ENCODE measurements at regions of chr9 and their contacts with region 1.

Region 1: GRCh38 chr9:21294325-21294724 is 10.8 kb downstream of the IFNA5 start:
- DNase-seq: peak in 2 of 3 donors; percentile 48 to 66
- H3K4me3 ChIP-seq: no peak overlapping the region
- H3K27ac ChIP-seq: no peak overlapping the region
- H3K4me1 ChIP-seq: peaks cover 11 to 26% (median 18%) of the 10 kb centered on the region in 4 experiments
- H3K27me3 ChIP-seq: no peaks in the 10 kb centered on the region

Region 2: GRCh38 chr9:21239911-21240310 is 54.4 kb before region 1 on chr9 and contains the start of gene IFNA14:
- CTCF ChIA-PET with region 1: interaction called, 10 read pairs
- POLR2A ChIA-PET with region 1: no interaction called
- DNase-seq: peak in 1 of 3 donors; percentile 2
- H3K4me3 ChIP-seq: no peak within 1 kb of the TSS
- H3K27ac ChIP-seq: no peak within 1 kb of the TSS
- H3K4me1 ChIP-seq: peaks cover 2 to 10% (median 5%) of the 10 kb centered on the region in 4 experiments
- H3K27me3 ChIP-seq: no peaks in the 10 kb centered on the region

Region 3: GRCh38 chr9:21326526-21327139 is 32.3 kb after region 1 on chr9:
- CTCF ChIA-PET with region 1: no interaction called
- POLR2A ChIA-PET with region 1: no interaction called
- DNase-seq: peak; percentile 55 to 76 (median 73)
- H3K4me3 ChIP-seq: no peak overlapping the region
- H3K27ac ChIP-seq: no peak overlapping the region
- H3K4me1 ChIP-seq: peaks cover 0 to 20% (median 13%) of the 10 kb centered on the region in 4 experiments
- H3K27me3 ChIP-seq: no peaks in the 10 kb centered on the region

Region 4: DNA sequence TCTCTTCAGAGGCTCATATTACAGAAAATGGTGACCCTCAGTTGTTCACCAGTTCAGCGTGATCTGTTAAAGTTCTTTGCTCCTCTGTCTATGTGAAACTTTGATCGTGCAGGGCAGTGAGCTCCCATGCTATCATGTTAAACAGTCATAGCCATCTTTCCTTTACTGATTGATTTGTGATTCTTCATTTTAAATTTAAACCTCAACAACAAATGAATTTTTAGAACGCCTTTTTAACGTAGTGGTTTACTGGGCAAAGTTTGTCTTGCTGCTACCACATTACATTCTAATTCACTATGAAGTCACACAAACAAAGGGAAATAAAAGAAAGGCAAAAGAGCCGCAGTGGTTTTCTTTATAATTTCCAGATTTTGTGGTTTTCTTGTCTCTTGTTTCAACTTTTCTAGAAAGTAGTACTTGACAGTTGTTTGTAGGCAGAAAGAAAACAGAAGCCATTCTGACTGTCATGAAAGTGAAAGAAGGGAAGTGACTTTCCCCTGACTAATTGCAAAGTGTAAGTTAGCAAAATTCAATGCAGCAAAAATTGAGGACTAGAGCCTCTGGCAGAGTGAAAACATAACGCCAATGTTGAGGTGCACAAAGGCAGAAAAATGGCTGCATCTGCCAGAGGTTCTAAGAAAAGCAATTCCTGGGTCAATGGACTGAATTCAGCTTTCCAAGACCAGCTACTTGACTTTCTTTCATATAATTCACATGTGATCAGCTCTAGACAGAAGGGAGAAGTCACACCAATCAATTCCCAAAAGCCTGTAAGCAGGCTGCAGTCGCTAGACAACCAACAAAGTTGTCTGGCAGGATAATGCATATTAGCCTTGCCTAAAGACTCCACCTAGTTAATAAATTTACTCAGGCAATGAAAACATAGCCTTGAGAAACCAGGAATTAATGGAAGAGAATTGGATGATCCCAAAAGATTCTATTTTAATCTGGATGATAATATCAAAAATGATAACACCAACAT is 63.4 kb after region 1 on chr9:
- CTCF ChIA-PET with region 1: no interaction called
- POLR2A ChIA-PET with region 1: no interaction called
- DNase-seq: peak; percentile 9 to 71 (median 56)
- H3K4me3 ChIP-seq: peak overlapping the region in 2 of 7 experiments; percentile 36 to 37
- H3K27ac ChIP-seq: no peak overlapping the region
- H3K4me1 ChIP-seq: peaks cover 0 to 13% (median 6%) of the 10 kb centered on the region in 4 experiments
- H3K27me3 ChIP-seq: no peaks in the 10 kb centered on the region